ENCODE measurements at regions of chr6 and their contacts with region 1.

Region 1: DNA sequence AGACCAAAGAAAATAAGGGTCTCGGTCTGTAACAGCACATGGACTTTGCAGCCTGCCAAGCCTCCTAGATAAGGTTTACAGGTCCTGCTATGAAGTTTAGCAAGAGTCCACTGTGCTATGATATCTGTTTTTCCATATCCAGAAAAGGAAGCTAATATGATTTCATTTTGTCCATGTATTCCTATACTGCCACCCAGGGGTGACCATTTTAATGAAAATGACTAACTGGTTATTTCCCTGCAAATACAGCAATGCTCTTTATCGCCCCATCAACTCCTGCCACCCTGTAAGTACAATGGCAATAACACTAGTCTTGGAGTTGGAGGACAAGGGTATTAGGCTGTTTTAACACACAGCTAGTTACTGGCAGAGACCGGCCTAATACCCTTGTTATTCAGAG is 115.1 kb upstream of the GLP1R start:
- DNase-seq: peak; percentile 54
- H3K4me3 Mint-ChIP-seq: no peak overlapping the region
- H3K27ac Mint-ChIP-seq: no peak overlapping the region
- H3K4me1 Mint-ChIP-seq: no peaks in the 10 kb centered on the region
- H3K27me3 Mint-ChIP-seq: peaks cover 22% of the 10 kb centered on the region
- CTCF ChIP-seq: peak; percentile 35

Region 2: GRCh38 chr6:38806271-38806670 is 127.2 kb before region 1 on chr6:
- CTCF ChIA-PET with region 1: no interaction called
- intact Hi-C with region 1: loop called (anchors 5 kb)
- DNase-seq: no peak
- H3K4me3 Mint-ChIP-seq: no peak overlapping the region
- H3K27ac Mint-ChIP-seq: no peak overlapping the region
- H3K4me1 Mint-ChIP-seq: peaks cover 15% of the 10 kb centered on the region
- H3K27me3 Mint-ChIP-seq: peaks cover under 1% of the 10 kb centered on the region
- CTCF ChIP-seq: no peak

Region 3: DNA sequence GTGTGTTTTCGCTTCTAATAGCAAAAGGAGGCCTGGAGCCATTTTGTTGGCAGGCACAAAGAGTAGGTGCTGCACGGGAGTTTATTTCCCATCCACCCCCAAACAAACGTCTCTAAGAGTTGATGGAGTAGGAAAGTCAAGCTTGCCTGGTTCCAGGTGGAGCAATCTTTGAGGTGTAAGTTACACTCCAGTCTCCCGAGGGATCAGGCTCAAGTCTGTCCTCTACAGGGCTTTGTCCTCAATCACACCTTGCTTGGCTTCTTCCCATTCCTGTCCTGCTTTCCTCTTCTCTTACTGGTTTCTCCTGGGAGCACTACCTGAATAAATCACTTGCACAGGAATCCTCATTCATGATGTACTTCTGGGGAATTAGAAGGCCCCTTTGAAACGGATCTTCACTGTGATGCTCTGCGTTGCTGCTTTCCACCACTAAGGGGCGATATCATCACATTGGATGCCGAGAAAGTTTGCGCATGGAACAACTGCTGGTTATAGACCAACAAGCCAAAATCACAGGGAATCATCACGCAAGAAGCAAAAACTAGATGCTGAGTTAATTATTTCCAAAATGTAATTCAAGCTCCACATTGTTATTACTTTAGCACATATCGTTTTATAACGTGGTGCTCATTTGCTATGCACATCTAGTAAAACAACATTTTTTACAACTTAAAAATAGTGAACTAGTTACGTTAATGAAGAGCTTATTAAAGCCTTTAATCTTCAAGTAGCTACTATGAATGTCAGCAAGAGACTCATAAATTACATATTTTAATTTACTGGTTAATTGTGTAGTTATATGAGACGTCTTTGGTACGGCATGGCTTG is 61.5 kb before region 1 on chr6:
- CTCF ChIA-PET with region 1: interaction called, 16 read pairs
- intact Hi-C with region 1: loop called (anchors 1 kb)
- DNase-seq: peak; percentile 74
- H3K4me3 Mint-ChIP-seq: no peak overlapping the region
- H3K27ac Mint-ChIP-seq: no peak overlapping the region
- H3K4me1 Mint-ChIP-seq: no peaks in the 10 kb centered on the region
- H3K27me3 Mint-ChIP-seq: peaks cover 15% of the 10 kb centered on the region
- CTCF ChIP-seq: peak; percentile 91

Measured in Calu3 (cell line).